GM12878 (cell line): ENCODE measurements at regions of chr18 and their contacts with region 1.

Region 1: DNA sequence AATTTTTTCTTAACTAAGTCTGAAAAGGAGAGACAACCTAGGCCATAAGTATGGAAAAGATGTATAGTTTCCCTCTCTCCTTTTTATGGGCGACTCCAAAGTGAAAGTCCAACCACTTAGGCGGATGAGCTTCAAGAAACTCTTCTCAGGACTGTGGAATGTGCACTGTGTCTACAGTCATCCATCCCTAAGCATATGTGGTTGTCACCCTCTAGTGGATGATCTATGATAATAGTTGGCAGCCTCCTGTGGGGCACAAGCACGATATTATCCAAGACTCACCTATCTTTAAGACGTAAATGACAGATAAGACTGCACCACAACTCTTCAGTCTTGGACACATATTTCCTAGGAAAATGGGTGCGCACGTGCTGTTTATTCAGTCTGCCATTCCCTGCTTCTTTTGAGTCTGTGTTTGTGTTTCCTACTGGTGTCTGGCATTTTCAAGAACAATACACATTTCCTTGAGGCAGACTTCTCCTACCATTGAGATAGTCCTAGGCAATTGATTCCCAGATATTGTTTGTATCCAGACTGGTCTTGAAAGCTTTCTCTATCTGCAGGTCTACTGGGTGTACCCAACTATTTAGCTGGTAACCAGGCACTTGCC is 145.5 kb upstream of the CTAGE1 start:
- DNase-seq: peak; percentile 3
- ATAC-seq: peak; percentile 97
- H3K4me3 ChIP-seq: no peak overlapping the region
- H3K27ac ChIP-seq: no peak overlapping the region
- H3K4me1 ChIP-seq: no peaks in the 10 kb centered on the region
- H3K27me3 ChIP-seq: peaks cover 2 to 3% of the 10 kb centered on the region in 2 experiments; a peak in 2 of 4 replicates
- CTCF ChIP-seq: peak; percentile 46 to 67 (median 63); a peak in 5 of 6 replicates
- EP300 ChIP-seq: no peak
- POLR2A ChIP-seq: no peak
- RAD21 ChIP-seq: peak; percentile 79

Region 2: DNA sequence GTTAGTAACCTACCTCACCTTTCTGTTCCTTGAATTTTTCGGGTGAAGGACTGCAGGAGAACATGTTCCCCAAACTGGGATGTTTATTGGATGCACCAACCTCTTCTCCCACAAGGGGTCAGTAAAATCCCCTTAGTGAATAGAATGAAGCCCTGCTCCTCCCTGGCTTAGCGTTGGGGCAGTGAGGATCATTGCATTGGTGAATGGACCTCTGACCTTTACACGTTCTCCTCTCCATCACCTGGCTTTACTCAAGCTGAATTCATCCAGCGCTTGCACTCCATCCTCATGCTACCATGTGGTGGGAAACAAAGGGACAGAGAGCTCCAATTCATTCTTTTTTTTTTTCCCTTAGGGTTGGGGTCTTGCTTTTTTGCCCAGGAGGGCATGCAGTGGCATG is 665.4 kb before region 1 on chr18:
- CTCF ChIA-PET with region 1: no interaction called
- POLR2A ChIA-PET with region 1: no interaction called
- RAD21 ChIA-PET with region 1: interaction called, 3 read pairs
- SMC1A ChIA-PET with region 1: interaction called, 3 read pairs
- in situ Hi-C with region 1: loop called (anchors 10 kb)
- intact Hi-C with region 1: loop called (anchors 1 kb)
- DNase-seq: no peak
- ATAC-seq: peak; percentile 89
- H3K4me3 ChIP-seq: no peak overlapping the region
- H3K27ac ChIP-seq: no peak overlapping the region
- H3K4me1 ChIP-seq: no peaks in the 10 kb centered on the region
- H3K27me3 ChIP-seq: no peaks in the 10 kb centered on the region; a peak in 2 of 4 replicates
- CTCF ChIP-seq: peak; percentile 71 to 80 (median 79)
- EP300 ChIP-seq: no peak
- POLR2A ChIP-seq: no peak
- RAD21 ChIP-seq: peak; percentile 81

Region 3: DNA sequence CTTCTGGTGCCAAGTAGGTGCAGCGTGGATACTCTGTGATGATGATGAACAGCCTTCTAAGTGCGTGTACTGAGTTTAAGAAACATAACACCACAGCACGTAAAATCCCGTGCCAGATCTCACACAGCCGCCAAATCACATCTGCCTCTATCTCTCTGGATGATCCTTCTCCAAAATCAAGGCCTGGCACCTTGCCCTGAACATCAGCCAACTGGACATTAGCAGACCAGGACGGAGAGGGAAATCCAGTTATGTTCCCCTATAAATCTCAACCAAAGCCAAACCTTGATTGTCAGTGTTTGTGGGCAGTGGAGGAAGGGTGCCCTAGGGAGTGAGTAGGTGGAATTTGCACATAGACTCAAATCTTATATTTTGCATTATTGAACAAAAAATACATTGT is 658.3 kb before region 1 on chr18:
- CTCF ChIA-PET with region 1: no interaction called
- POLR2A ChIA-PET with region 1: no interaction called
- RAD21 ChIA-PET with region 1: no interaction called
- SMC1A ChIA-PET with region 1: no interaction called
- in situ Hi-C with region 1: loop called (anchors 10 kb)
- intact Hi-C with region 1: no loop called
- DNase-seq: no peak
- ATAC-seq: no peak
- H3K4me3 ChIP-seq: no peak overlapping the region
- H3K27ac ChIP-seq: no peak overlapping the region
- H3K4me1 ChIP-seq: no peaks in the 10 kb centered on the region
- H3K27me3 ChIP-seq: no peaks in the 10 kb centered on the region; a peak in 2 of 4 replicates
- CTCF ChIP-seq: no peak
- EP300 ChIP-seq: no peak
- POLR2A ChIP-seq: no peak
- RAD21 ChIP-seq: no peak

Region 4: DNA sequence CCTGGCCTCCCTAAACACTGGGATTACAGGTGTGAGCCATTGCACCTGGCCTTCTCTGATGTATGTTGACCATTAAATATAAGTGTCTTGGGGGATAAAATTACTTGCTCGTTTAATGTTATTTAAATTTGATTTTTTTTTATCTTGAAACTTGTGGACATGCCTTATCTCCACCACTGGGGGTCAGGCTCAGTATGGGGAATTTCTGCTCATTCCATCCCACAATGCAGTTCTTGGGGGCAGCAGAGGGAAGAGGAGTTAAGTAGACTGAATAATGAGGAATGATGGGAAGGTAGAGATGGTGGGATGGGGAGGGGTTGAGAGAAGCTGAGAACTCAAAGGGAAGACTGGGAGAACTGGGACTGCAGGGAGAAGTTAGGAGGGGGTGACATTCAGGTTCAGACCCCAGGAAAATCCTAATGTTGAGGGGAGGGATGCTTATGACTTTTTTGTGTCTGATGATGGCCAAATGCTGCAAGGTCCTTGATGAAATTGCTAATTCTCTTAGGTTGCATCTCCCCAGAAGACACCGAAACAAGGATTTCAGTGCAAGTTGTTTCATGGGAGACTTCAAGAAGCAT is 648.4 kb before region 1 on chr18:
- CTCF ChIA-PET with region 1: no interaction called
- POLR2A ChIA-PET with region 1: no interaction called
- RAD21 ChIA-PET with region 1: no interaction called
- SMC1A ChIA-PET with region 1: no interaction called
- in situ Hi-C with region 1: no loop called
- intact Hi-C with region 1: loop called (anchors 2 kb)
- DNase-seq: no peak
- ATAC-seq: 0 out of 3 replicates have a peak, but pooled peaks have one; percentile 44
- H3K4me3 ChIP-seq: no peak overlapping the region
- H3K27ac ChIP-seq: no peak overlapping the region
- H3K4me1 ChIP-seq: peaks cover 4% of the 10 kb centered on the region; the same call in 1 of the 2 replicates
- H3K27me3 ChIP-seq: no peaks in the 10 kb centered on the region
- CTCF ChIP-seq: peak; percentile 42 to 49 (median 44); a peak in 5 of 6 replicates
- EP300 ChIP-seq: no peak
- POLR2A ChIP-seq: no peak
- RAD21 ChIP-seq: peak; percentile 62

Region 5: GRCh38 chr18:21997207-21998143 is 565.7 kb before region 1 on chr18:
- CTCF ChIA-PET with region 1: interaction called, 7 read pairs
- POLR2A ChIA-PET with region 1: no interaction called
- RAD21 ChIA-PET with region 1: no interaction called
- SMC1A ChIA-PET with region 1: interaction called, 11 read pairs
- in situ Hi-C with region 1: loop called (anchors 10 kb)
- intact Hi-C with region 1: loop called (anchors 2 kb)
- DNase-seq: peak; percentile 9
- ATAC-seq: peak; percentile 79
- H3K4me3 ChIP-seq: no peak overlapping the region
- H3K27ac ChIP-seq: no peak overlapping the region
- H3K4me1 ChIP-seq: no peaks in the 10 kb centered on the region
- H3K27me3 ChIP-seq: no peaks in the 10 kb centered on the region
- CTCF ChIP-seq: peak; percentile 73 to 86 (median 83)
- EP300 ChIP-seq: no peak
- POLR2A ChIP-seq: no peak
- RAD21 ChIP-seq: peak; percentile 60

Region 6: DNA sequence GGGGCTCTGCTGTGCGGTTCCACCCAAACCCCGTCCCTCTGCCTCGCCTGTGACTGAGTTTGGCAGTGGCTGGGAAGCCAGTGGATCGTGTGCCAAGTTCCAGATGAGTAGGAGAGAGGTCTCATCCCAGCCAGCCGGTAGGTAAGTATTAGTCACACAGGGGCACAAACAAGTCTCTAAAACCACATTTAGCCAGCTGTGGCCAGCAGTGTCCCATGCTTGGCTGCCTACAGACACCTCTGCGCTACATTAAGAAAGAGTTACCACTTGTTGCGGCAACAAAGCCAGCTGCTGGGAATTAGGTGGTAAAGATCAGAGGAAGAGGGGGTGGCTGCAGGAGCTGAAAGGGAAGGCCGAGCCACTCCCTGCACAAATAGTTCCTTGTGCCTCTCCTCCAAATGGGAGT is 312.6 kb before region 1 on chr18:
- CTCF ChIA-PET with region 1: no interaction called
- POLR2A ChIA-PET with region 1: no interaction called
- RAD21 ChIA-PET with region 1: no interaction called
- SMC1A ChIA-PET with region 1: no interaction called
- in situ Hi-C with region 1: no loop called
- intact Hi-C with region 1: loop called (anchors 10 kb)
- DNase-seq: no peak
- ATAC-seq: no peak
- H3K4me3 ChIP-seq: no peak overlapping the region
- H3K27ac ChIP-seq: no peak overlapping the region
- H3K4me1 ChIP-seq: no peaks in the 10 kb centered on the region
- H3K27me3 ChIP-seq: no peaks in the 10 kb centered on the region
- CTCF ChIP-seq: no peak
- EP300 ChIP-seq: no peak
- POLR2A ChIP-seq: no peak
- RAD21 ChIP-seq: no peak